Esophagus muscularis mucosa (tissue), 4 donors: ENCODE measurements at regions of chr17 and their contacts with region 1.

Region 1: DNA sequence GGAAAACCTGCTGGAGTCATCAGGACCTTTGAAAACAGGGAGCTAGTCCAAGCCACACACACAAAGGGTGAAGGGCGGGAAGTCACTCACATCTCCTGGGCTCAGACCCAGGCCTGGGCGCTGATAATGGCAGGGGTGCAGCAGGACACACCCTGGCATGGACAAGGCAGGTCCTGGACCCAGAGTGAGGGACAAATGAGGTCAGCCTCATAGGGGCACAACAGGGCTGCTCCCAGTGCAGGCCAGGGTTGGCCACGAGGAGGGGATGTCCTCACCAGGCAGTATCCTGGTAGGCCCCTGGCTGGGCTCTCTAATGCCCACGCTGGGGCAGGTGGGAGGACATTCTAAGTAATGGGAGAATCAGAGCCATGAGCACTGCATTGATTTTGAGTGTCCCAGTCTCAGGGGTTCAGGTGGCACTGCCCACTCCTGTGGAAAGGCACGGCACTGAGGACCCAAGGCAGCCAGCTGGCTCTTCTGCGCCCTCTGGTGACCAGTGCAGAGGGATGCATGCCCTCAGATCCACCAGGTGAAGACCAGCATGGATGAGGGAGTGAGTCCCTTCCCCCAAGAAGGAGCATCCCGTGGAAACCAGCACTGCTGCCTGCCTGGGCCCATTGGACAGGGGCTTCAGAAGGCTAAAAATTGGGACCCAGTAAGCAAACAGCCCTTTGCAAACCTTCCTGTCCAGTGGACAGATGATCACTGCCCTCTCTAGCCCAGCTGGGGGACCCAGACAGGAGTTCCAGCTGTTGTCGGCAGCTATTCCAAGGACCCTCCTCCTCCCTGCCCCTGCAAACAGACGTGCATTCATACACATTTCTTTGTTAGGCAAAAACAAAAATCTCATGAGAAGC is 23.4 kb upstream of the SREBF1 start:
- DNase-seq: no peak
- H3K4me3 ChIP-seq: no peak overlapping the region
- H3K27ac ChIP-seq: peak overlapping the region in 1 of 4 donors; percentile 4
- H3K4me1 ChIP-seq: peaks cover 8 to 25% (median 21%) of the 10 kb centered on the region in 4 donors
- H3K27me3 ChIP-seq: no peaks in the 10 kb centered on the region
- CTCF ChIP-seq: peak in 2 of 3 experiments; percentile 94 to 98
- EP300 ChIP-seq: no peak
- POLR2A ChIP-seq: no peak

Region 2: DNA sequence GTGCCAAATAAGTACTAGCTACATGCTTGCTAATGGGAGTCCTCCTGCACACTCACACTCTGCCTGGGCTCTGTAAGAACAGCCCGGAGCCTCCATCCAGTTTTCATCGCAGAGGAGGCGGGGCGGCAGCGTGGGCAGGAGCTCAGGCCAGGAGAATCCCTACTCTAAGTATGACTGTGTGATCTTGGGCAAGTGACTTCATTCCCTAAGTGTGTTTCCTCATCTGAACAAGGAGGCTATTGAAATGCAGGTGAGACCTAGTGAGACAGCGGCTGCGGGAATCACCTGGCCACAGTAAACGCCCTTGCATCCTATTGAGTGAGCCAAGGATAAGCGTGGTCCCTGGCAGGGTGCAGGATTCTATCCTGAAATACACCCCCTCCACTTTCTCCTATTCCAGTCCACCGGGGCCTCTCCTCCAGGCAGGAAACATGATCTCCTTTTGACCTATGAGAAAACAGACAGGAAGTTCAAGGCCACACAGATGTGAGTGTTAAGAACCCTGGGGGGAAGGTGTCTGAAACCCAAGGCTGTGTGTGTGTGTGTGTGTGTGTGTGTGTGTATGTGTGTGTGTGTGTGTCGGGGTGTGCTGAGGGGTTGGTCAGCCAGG is 184.1 kb before region 1 on chr17:
- intact Hi-C with region 1: loop called (anchors 5 kb)
- DNase-seq: no peak
- H3K4me3 ChIP-seq: no peak overlapping the region
- H3K27ac ChIP-seq: no peak overlapping the region
- H3K4me1 ChIP-seq: peaks cover 0 to 8% (median 6%) of the 10 kb centered on the region in 4 donors
- H3K27me3 ChIP-seq: no peaks in the 10 kb centered on the region
- CTCF ChIP-seq: no peak
- EP300 ChIP-seq: no peak
- POLR2A ChIP-seq: no peak

Region 3: GRCh38 chr17:17812211-17813057 is 47.7 kb before region 1 on chr17:
- intact Hi-C with region 1: loop called (anchors 1 kb)
- DNase-seq: peak; percentile 97
- H3K4me3 ChIP-seq: no peak overlapping the region
- H3K27ac ChIP-seq: peak overlapping the region; percentile 35 to 83 (median 52)
- H3K4me1 ChIP-seq: peaks cover 49 to 86% (median 70%) of the 10 kb centered on the region in 4 donors
- H3K27me3 ChIP-seq: no peaks in the 10 kb centered on the region
- CTCF ChIP-seq: peak in 2 of 3 experiments; percentile 99 to 100
- EP300 ChIP-seq: no peak
- POLR2A ChIP-seq: no peak

Region 4: GRCh38 chr17:17950806-17951205 is 90.7 kb after region 1 on chr17:
- intact Hi-C with region 1: no loop called
- DNase-seq: no peak
- H3K4me3 ChIP-seq: no peak overlapping the region
- H3K27ac ChIP-seq: no peak overlapping the region
- H3K4me1 ChIP-seq: peaks cover 0 to 43% (median 18%) of the 10 kb centered on the region in 4 donors
- H3K27me3 ChIP-seq: no peaks in the 10 kb centered on the region
- CTCF ChIP-seq: no peak
- EP300 ChIP-seq: no peak
- POLR2A ChIP-seq: no peak